Activated CD4-positive, alpha-beta T cell treated with anti-CD3 and anti-CD28 coated beads for 36 hours (primary cell): ENCODE measurements at regions of chr2 and their contacts with region 1.

Region 1: DNA sequence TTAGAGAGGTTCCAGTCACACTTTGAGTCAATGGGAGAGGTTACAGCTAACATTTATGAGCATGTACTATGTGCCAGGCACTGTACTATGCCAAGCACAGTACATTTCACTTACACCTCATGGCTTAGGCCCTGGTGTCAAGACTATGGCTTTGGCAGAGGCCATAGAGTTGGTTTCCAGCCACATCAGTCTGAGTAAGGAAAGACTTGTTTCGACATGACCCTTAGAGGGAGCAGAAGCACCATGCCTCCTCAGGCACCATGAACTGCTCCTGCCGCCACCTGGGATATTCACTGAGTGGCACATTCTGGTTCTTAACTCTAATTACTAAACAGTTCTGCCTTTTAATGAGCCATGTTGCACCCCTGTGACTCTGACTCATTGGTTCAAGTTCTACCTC is 12.7 kb downstream of the DGUOK start:
- DNase-seq: peak; percentile 59
- ATAC-seq: peak; percentile 78
- H3K4me3 Mint-ChIP-seq: no peak overlapping the region
- H3K27ac Mint-ChIP-seq: peak overlapping the region; percentile 71
- H3K4me1 Mint-ChIP-seq: peaks cover 82% of the 10 kb centered on the region
- H3K27me3 Mint-ChIP-seq: no peaks in the 10 kb centered on the region

Region 2: GRCh38 chr2:73759285-73759764 is 180.1 kb before region 1 on chr2:
- CTCF ChIA-PET with region 1: no interaction called
- POLR2A ChIA-PET with region 1: no interaction called
- intact Hi-C with region 1: no loop called
- DNase-seq: no peak
- ATAC-seq: no peak
- H3K4me3 Mint-ChIP-seq: no peak overlapping the region
- H3K27ac Mint-ChIP-seq: no peak overlapping the region
- H3K4me1 Mint-ChIP-seq: no peaks in the 10 kb centered on the region
- H3K27me3 Mint-ChIP-seq: no peaks in the 10 kb centered on the region

Region 3: DNA sequence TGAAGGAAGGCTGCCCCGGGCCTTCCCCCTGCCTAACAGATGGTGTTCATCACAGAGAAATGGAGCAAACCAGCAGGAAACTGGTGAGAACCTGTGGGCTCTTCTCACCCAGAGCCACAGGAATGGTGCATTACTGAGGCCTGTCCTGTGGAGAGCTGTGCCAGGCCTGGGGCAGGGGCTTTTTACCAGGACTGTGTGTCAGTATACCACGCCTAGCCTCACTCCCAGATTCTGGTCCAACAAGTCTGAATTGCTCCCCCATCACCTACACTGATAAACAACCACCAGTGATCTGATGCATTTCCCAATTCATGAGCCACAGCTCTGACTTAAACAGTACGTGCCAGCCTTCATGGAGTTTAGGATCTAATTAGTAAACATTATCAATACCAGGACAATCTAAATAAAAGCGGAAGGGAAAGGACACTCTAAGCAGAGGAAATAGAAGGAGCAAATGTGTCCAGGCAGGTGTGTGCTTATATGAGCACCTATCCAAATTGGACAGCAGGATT is 21.7 kb before region 1 on chr2:
- CTCF ChIA-PET with region 1: no interaction called
- POLR2A ChIA-PET with region 1: no interaction called
- intact Hi-C with region 1: no loop called
- DNase-seq: no peak
- ATAC-seq: no peak
- H3K4me3 Mint-ChIP-seq: no peak overlapping the region
- H3K27ac Mint-ChIP-seq: no peak overlapping the region
- H3K4me1 Mint-ChIP-seq: peaks cover 4% of the 10 kb centered on the region
- H3K27me3 Mint-ChIP-seq: no peaks in the 10 kb centered on the region

Region 4: DNA sequence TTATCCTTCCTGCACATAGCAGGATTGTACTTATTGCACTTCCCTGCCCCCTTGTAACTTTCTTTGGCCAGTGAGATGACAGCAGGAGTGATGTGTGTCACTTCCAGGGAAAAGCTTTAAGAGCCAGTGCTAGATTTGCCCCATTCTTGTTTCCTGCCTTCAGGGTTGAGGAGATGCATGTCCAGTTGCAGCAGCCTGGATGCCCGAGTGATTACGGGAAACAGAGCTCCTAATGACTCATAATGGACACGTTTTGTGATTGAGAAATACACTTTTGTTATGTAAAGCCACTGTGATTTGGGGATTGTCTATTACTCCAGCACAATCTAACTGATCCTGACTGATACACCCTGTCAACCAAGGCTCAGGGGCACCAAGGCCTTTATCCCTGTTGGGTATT is 40.3 kb after region 1 on chr2:
- CTCF ChIA-PET with region 1: interaction called, 4 read pairs
- POLR2A ChIA-PET with region 1: no interaction called
- intact Hi-C with region 1: loop called in 1 of 2 experiments (anchors 1 kb)
- DNase-seq: no peak
- ATAC-seq: peak; percentile 8
- H3K4me3 Mint-ChIP-seq: peak overlapping the region; percentile 68
- H3K27ac Mint-ChIP-seq: peak overlapping the region; percentile 91
- H3K4me1 Mint-ChIP-seq: peaks cover 80% of the 10 kb centered on the region
- H3K27me3 Mint-ChIP-seq: no peaks in the 10 kb centered on the region